ENCODE measurements at regions of chr19 and their contacts with region 1.

Region 1: DNA sequence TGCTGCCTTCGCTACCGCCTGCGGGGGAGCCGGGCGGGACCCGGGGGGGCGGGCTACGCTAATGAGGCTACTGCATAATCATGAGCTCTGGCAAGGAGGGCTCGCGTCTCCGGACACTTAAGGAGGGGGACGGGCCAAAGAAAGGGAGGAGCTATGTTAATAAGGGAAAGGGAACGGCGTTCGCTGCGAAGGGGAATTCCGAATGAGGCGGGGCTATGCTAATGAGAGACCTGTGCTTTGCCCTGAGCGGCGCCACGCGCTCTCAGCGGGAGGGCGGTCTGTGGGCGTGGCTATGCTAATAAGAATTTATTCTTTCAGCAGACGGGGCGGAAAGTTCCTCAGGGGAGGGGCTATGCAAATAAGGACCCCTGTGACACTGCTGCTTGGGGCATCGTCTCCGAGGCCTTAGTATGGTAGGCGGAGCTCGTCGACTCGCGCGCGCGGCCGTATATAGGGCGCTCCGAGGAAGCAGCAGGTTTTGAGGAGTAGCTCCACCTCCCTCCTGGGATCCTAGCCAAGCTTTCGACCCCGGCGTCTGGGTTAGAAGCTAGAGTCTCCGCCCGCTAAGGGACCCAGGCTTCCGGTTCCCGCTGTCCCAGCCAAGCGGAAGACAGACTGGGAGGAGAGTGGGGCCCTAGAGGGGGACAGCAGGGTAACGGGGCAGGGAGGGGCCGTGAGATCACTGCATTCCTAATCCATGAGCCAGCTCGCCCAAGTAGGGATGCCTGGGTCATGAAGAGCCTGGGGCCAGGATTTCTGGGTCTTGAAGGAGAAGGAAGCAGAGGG is at the start of gene RRAS:
- DNase-seq: peak; percentile 99 to 100 (median 100)
- H3K4me3 ChIP-seq: peak within 1 kb of the TSS; percentile 42 to 73
- H3K4me3 Mint-ChIP-seq: peak within 1 kb of the TSS; percentile 89 to 95 (median 92)
- H3K27ac ChIP-seq: peak within 1 kb of the TSS; percentile 97
- H3K27ac Mint-ChIP-seq: peak within 1 kb of the TSS; percentile 96 to 100 (median 99)
- H3K4me1 ChIP-seq: peaks cover 63% of the 10 kb centered on the region
- H3K4me1 Mint-ChIP-seq: peaks cover 44 to 73% (median 56%) of the 10 kb centered on the region in 4 donors
- H3K27me3 ChIP-seq: no peaks in the 10 kb centered on the region
- H3K27me3 Mint-ChIP-seq: no peaks in the 10 kb centered on the region
- total RNA-seq, gene RRAS: 12.0 to 13.4 TPM

Region 2: DNA sequence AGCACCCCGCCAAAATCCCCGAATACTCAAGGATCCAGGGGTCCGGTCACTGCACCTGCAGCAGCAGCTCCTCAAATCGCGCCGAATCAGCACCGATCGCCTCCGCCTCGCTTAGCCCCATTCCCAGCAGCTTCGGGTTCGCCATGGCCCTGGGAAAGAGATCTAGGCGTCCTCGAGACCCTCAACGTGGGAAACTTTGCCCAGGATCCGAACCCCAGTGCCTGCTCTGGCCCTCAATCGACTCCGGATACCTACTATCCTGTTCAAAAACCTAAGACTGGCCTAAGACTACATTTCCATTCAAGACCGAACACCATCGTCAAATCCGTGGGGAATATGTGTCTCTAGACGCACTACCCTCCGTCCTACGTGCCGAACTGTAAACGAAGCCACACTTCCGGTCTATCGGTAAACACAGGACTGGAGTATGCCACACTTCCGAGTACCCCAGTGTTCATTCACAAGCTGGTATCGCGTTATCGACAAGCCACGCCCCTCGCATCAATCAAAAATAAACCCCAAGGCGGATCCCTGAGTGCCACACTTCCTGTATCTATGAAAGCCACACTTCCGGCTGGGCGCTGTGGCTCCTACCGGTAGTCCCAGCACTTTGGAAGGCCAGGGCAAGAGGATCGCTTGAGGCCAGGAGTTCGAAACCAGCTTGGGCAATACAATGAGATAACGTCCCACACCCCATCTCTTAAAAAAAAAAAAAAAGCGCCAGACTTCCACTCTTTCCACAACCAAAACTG is 188.7 kb before region 1 on chr19 and contains the start of gene PIH1D1:
- CTCF ChIA-PET with region 1: no interaction called
- POLR2A ChIA-PET with region 1: interaction called, 19 read pairs
- intact Hi-C with region 1: loop called (anchors 2 kb)
- DNase-seq: peak; percentile 91 to 98 (median 95)
- H3K4me3 ChIP-seq: peak within 1 kb of the TSS; percentile 66 to 90
- H3K4me3 Mint-ChIP-seq: peak within 1 kb of the TSS; percentile 91 to 100 (median 99)
- H3K27ac ChIP-seq: peak within 1 kb of the TSS; percentile 91
- H3K27ac Mint-ChIP-seq: peak within 1 kb of the TSS; percentile 96 to 100 (median 100)
- H3K4me1 ChIP-seq: peaks cover 37% of the 10 kb centered on the region
- H3K4me1 Mint-ChIP-seq: peaks cover 25 to 70% (median 41%) of the 10 kb centered on the region in 4 donors
- H3K27me3 ChIP-seq: no peaks in the 10 kb centered on the region
- H3K27me3 Mint-ChIP-seq: no peaks in the 10 kb centered on the region
- total RNA-seq, gene PIH1D1: 178 to 186 TPM

Region 3: DNA sequence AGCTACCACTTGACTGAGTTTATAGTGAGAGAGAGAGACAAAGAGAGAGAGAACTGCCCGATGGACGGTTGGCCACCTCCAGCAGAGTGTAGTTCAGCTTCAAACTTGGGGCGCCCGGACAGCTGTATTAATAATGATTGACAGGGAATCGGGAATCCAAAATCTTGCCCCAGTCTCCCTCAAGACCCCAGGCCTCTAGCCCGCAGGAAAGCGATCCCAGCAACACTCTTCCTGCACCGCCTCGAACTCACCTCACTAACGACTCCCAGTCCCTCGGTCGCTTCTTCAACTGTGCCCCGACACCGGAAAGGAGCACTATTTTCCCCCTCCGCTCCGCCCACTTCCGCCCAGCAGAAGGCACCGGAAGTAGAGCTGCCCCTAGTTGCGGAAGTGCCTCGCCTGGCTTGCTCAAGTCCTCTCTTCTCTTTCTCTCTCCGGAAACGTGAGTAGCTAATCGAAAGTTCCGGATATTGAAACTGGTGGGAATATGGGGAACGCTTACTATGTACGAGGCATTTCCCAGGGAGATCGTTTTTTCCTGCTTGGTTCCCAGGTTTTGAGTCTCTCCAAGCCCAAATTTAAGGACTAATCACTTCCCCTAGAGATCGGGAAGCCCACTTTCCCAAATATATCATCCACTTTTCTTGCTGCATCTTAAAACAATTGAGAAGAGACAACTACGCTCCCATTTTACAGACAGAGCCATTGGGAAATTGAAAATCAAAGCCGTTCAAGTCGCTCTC is 59.9 kb before region 1 on chr19 and contains the start of gene NOSIP:
- CTCF ChIA-PET with region 1: interaction called, 9 read pairs
- POLR2A ChIA-PET with region 1: interaction called, 41 read pairs
- intact Hi-C with region 1: loop called (anchors 1 kb)
- DNase-seq: peak; percentile 94 to 97 (median 95)
- H3K4me3 ChIP-seq: peak within 1 kb of the TSS; percentile 54 to 99
- H3K4me3 Mint-ChIP-seq: peak within 1 kb of the TSS; percentile 90 to 97 (median 94)
- H3K27ac ChIP-seq: peak within 1 kb of the TSS; percentile 80
- H3K27ac Mint-ChIP-seq: peak within 1 kb of the TSS; percentile 85 to 96 (median 94)
- H3K4me1 ChIP-seq: peaks cover 31% of the 10 kb centered on the region
- H3K4me1 Mint-ChIP-seq: peaks cover 21 to 40% (median 28%) of the 10 kb centered on the region in 4 donors
- H3K27me3 ChIP-seq: no peaks in the 10 kb centered on the region
- H3K27me3 Mint-ChIP-seq: no peaks in the 10 kb centered on the region
- total RNA-seq, gene NOSIP: 177 to 191 TPM

Region 4: DNA sequence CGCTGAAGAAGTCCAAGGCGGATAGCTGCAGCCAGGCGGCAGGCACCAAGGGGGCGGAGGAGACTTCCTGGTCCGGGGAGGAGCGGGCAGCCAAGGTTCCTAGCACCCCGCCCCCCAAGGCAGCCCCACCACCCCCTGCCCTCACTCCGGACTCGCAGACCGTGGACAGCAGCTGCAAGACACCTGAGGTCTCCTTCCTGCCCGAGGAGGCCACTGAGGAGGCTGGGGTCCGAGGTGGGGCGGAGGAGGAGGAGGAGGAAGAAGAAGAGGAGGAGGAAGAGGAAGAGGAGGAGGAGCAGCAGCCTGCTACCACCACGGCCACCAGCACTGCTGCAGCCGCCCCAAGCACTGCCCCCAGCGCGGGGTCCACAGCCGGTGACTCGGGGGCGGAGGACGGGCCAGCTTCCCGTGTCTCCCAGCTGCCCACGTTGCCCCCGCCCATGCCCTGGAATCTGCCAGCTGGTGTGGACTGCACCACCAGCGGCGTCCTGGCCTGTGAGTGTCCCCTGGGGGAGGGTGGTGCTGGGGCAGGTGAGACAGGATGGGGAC is 13.0 kb after region 1 on chr19:
- CTCF ChIA-PET with region 1: interaction called, 5 read pairs
- POLR2A ChIA-PET with region 1: interaction called, 10 read pairs
- intact Hi-C with region 1: no loop called
- DNase-seq: peak in 1 of 5 donors; percentile 39
- H3K4me3 ChIP-seq: no peak overlapping the region
- H3K4me3 Mint-ChIP-seq: no peak overlapping the region
- H3K27ac ChIP-seq: no peak overlapping the region
- H3K27ac Mint-ChIP-seq: peak overlapping the region in 1 of 7 donors; percentile 51
- H3K4me1 ChIP-seq: no peaks in the 10 kb centered on the region
- H3K4me1 Mint-ChIP-seq: peaks cover 0 to 9% (median under 1%) of the 10 kb centered on the region in 4 donors
- H3K27me3 ChIP-seq: no peaks in the 10 kb centered on the region
- H3K27me3 Mint-ChIP-seq: no peaks in the 10 kb centered on the region

Region 5: DNA sequence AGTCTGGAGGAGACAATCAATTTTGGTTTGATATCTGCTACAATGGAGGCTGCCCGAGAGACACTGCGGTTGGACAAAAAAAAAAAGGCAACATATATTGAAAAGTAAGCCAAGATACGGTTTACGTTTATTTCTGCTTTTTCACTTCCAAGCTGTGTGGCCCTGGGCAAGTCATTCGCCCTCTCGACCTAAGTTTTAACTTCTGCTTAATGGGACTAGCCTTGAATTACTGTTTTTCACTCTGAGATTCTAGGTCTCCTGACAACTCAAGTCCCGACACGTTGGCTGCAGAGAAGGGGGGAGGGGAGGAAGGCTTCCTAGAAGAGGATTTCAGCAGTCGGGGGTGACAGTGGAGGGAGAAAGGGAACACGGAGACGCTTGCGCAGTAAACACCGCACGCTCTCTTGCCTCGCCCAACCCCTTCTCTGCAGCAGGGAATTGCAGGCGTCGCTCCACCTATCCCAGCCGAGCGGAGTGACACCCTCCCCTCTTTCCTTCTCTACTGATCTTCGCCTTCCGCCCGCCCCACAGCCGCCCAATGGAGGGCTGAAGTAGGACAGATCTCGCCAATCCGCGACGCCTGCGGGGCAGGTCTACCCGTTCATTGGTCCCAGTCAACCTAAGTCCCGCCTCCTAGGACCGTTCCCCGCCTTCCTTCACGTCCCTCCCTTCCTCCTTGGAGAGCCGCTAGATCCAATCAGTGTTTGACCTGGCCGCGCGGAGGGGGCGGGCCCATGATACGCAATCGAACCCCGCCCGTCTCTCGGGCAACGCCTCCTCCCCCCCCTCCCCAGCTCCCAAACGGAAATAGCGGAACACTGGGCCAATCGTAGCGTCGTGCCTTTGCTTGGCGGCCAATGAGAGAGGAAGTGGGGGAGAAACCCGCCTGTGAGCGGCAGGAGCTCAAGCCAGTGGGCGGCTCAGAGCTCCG is 126.0 kb after region 1 on chr19:
- CTCF ChIA-PET with region 1: no interaction called
- POLR2A ChIA-PET with region 1: no interaction called
- intact Hi-C with region 1: loop called (anchors 1 kb)
- DNase-seq: peak; percentile 98 to 100 (median 100)
- H3K4me3 ChIP-seq: peak overlapping the region; percentile 75 to 88
- H3K4me3 Mint-ChIP-seq: peak overlapping the region; percentile 89 to 99 (median 94)
- H3K27ac ChIP-seq: peak overlapping the region; percentile 77
- H3K27ac Mint-ChIP-seq: peak overlapping the region; percentile 85 to 97 (median 96)
- H3K4me1 ChIP-seq: peaks cover 36% of the 10 kb centered on the region
- H3K4me1 Mint-ChIP-seq: peaks cover 30 to 48% (median 34%) of the 10 kb centered on the region in 4 donors
- H3K27me3 ChIP-seq: no peaks in the 10 kb centered on the region
- H3K27me3 Mint-ChIP-seq: no peaks in the 10 kb centered on the region

Region 6: DNA sequence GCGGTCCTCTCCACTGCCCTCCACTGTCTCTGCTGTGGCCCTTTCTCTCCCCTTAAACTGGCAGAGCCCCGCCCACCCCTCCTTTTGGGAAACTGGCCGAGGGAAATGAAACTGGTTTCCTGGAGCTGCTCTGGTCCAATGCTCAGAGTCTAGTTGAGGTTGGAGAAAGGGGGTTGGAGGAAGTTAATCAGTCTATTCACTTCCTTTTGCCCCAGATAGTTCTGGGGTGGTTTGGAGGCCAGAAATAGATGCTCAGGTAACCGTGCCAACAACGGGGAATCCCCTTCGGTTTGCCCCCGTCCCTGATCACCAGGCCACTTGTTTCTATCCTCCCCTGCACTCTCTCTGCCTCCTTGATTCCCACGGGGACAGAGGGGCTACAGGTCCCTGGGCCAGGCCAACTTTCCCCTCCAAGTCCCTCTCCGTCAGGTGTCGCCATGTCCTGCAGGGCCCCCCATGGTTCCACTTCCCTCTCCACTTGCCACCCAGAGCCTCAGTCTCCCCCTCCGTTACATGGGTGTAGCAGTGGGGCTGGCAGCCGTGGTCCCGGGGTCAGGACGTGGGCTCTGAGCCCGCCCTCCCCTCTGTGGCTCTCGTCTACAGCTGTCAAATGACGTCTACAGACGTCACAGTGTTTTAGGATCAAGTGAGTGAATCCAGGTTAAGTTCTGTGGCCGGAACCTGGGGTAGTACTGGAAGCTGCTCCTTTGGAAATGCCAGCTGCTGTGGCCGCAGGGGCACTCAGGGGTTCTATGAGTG is 256.7 kb after region 1 on chr19 and contains the start of gene IL4I1:
- CTCF ChIA-PET with region 1: no interaction called
- POLR2A ChIA-PET with region 1: no interaction called
- intact Hi-C with region 1: no loop called
- DNase-seq: peak; percentile 76 to 94 (median 87)
- H3K4me3 ChIP-seq: peak within 1 kb of the TSS; percentile 1 to 44
- H3K4me3 Mint-ChIP-seq: peak within 1 kb of the TSS; percentile 85 to 92 (median 90)
- H3K27ac ChIP-seq: peak within 1 kb of the TSS; percentile 98
- H3K27ac Mint-ChIP-seq: peak within 1 kb of the TSS; percentile 97 to 100 (median 99)
- H3K4me1 ChIP-seq: peaks cover 44% of the 10 kb centered on the region
- H3K4me1 Mint-ChIP-seq: peaks cover 23 to 54% (median 40%) of the 10 kb centered on the region in 4 donors
- H3K27me3 ChIP-seq: no peaks in the 10 kb centered on the region
- H3K27me3 Mint-ChIP-seq: no peaks in the 10 kb centered on the region
- total RNA-seq, gene IL4I1: 2.6 to 3.4 TPM